Gastrocnemius medialis (tissue), 4 donors: ENCODE measurements at regions of chr11 and their contacts with region 1.

Region 1: DNA sequence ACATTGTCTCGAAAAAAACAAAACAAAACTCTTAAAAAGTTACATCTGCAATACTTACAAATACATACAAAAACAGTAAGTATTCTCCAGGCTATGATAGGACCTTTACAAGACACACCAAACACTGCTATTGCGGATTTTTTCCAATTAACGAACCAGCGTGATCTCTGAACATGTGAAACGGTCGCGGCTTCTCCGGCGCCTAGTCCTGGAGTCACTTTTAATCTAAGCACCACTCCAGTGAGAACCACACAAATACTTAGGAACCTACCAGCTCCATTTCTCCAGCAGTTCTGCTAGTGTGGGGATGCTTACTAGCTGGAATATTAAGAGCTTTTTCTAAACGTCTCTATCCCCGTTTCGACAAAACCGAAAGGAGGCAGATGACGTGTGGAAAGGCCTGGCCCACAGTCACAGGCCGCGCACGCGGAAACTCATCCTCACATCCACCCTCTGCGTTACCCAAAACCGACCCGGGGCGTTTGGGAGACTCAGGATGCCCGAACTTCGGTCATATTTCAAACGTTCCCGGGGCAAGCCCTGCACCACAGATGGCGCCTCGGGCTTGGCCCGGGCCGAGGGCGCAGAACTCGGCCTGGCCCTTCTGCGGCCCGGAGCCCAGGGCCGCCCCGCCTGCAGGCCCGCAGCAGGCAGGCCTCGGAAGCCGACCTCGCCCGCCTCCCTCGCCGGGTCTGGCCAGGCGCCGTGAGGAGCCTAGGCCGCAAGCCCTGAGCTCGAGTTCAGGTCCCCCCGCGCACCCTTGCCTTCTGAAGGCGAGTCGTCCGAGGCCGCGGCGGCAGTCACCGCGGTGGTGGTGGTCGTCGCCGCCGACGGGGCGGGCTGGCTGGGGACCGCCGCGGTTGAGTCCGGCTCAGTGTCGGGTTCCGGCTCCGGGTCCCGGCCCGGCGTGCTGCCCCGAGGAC is 575 bp downstream of the FNBP4 start:
- DNase-seq: peak; percentile 64 to 72
- ATAC-seq: peak; percentile 52 to 57
- H3K4me3 ChIP-seq: peak overlapping the region; percentile 70 to 88 (median 75)
- H3K27ac ChIP-seq: peak overlapping the region; percentile 90 to 98 (median 96)
- H3K4me1 ChIP-seq: peaks cover 19 to 22% of the 10 kb centered on the region in 2 donors
- H3K27me3 ChIP-seq: no peaks in the 10 kb centered on the region
- CTCF ChIP-seq: peak in 1 of 5 experiments; percentile 8
- POLR2A ChIP-seq: no peak

Region 2: DNA sequence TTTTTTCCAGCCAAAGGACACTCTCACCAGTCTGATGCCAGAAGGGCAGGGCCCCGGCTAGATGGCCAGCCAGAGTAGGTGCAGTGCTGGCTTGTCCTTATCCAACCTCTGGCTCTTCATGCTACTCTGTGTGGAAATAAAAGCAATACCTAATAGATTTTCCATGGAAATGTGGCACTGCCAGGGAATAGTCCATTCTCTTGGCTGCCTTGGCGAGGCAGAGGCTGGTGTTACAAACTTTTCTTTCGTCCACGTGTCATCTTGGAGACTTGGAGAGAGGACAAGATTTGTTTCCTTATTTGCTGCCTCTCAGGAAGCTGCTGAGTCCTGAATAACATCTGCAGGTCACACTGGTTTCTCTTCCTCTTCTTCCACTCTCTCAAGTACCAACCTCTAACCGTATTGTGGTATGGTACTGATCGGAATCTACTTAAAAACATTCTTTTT is 155.2 kb before region 1 on chr11:
- in situ Hi-C with region 1: no loop called
- intact Hi-C with region 1: no loop called
- DNase-seq: no peak
- ATAC-seq: peak; percentile 39 to 52
- H3K4me3 ChIP-seq: no peak overlapping the region
- H3K27ac ChIP-seq: no peak overlapping the region
- H3K4me1 ChIP-seq: peaks cover 0 to 8% of the 10 kb centered on the region in 2 donors
- H3K27me3 ChIP-seq: no peaks in the 10 kb centered on the region
- CTCF ChIP-seq: no peak
- POLR2A ChIP-seq: no peak

Region 3: DNA sequence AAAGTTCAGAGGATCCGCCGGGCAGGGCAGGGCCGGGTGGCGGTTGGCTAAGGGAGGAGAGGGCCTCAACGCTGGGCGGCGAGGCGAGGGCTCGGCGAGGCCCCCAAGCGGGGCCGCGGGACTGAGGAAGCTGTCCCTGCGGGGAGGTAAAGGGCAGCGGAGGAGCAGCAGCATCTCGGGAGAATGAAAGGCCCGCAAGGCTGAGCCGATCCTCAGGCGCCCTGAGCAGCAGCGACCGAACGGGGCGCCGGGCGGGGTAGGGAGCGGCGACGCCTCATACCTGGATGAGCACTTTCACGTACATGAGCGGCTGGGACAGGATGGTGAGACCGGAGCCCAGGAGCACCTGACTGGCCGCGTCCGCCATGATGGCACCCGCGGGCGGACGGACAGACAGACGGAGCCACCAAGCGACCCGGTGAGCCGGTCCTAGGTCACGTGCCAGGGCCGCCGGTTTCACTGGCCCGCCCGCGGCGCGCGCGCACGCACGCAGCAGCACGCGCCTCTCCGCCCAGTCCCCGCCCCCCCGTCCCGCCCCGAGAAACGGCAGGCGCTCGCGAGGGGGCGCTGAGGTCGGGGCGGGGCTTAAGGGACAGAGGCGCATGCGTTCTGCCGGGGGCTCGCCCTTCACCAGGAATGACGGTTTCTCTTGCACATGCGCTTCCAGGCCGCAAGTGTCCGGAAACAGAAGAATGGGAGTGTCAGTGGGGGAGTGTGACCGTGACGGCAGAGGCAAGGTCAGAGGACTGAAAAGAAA is 124.3 kb before region 1 on chr11 and contains the start of gene MTCH2:
- in situ Hi-C with region 1: loop called in 1 of 4 experiments (anchors 25 kb)
- intact Hi-C with region 1: loop called (anchors 1 kb)
- DNase-seq: peak; percentile 94 to 95
- ATAC-seq: peak; percentile 95 to 96
- H3K4me3 ChIP-seq: peak within 1 kb of the TSS; percentile 70 to 100 (median 88)
- H3K27ac ChIP-seq: peak within 1 kb of the TSS; percentile 89 to 100 (median 99)
- H3K4me1 ChIP-seq: peaks cover 20 to 22% of the 10 kb centered on the region in 2 donors
- H3K27me3 ChIP-seq: no peaks in the 10 kb centered on the region
- CTCF ChIP-seq: peak in 3 of 5 experiments; percentile 35 to 56 (median 49)
- POLR2A ChIP-seq: peak; percentile 86 to 88
- total RNA-seq, gene MTCH2: 70.3 to 139 (median 85.6) TPM

Region 4: GRCh38 chr11:47786373-47786772 is 19.8 kb after region 1 on chr11:
- in situ Hi-C with region 1: no loop called
- intact Hi-C with region 1: loop called (anchors 2 kb)
- DNase-seq: peak; percentile 57 to 85
- ATAC-seq: peak; percentile 63 to 79
- H3K4me3 ChIP-seq: no peak overlapping the region
- H3K27ac ChIP-seq: peak overlapping the region; percentile 58 to 89 (median 86)
- H3K4me1 ChIP-seq: peaks cover 20 to 37% of the 10 kb centered on the region in 2 donors
- H3K27me3 ChIP-seq: no peaks in the 10 kb centered on the region
- CTCF ChIP-seq: peak in 1 of 5 experiments; percentile 10
- POLR2A ChIP-seq: no peak